SK-N-SH (cell line): ENCODE measurements at regions of chr14 and their contacts with region 1.

Region 1: GRCh38 chr14:105473677-105474482 is 741 bp upstream of the CRIP2 start:
- DNase-seq: peak; percentile 85
- H3K4me3 ChIP-seq: peak overlapping the region; percentile 52 to 92
- H3K27ac ChIP-seq: peak overlapping the region; percentile 81 to 99
- H3K4me1 ChIP-seq: peaks cover 18 to 63% of the 10 kb centered on the region in 2 experiments; a peak in 3 of 4 replicates
- H3K27me3 ChIP-seq: no peaks in the 10 kb centered on the region
- CTCF ChIP-seq: no peak
- EP300 ChIP-seq: no peak
- RAD21 ChIP-seq: no peak

Region 2: GRCh38 chr14:105368965-105369652 is 104.8 kb before region 1 on chr14:
- CTCF ChIA-PET with region 1: interaction called, 39 read pairs
- POLR2A ChIA-PET with region 1: no interaction called
- DNase-seq: no peak
- H3K4me3 ChIP-seq: no peak overlapping the region
- H3K27ac ChIP-seq: no peak overlapping the region
- H3K4me1 ChIP-seq: peaks cover 4 to 7% of the 10 kb centered on the region in 2 experiments; a peak in 2 of 4 replicates
- H3K27me3 ChIP-seq: no peaks in the 10 kb centered on the region
- CTCF ChIP-seq: no peak
- EP300 ChIP-seq: no peak
- RAD21 ChIP-seq: no peak

Region 3: DNA sequence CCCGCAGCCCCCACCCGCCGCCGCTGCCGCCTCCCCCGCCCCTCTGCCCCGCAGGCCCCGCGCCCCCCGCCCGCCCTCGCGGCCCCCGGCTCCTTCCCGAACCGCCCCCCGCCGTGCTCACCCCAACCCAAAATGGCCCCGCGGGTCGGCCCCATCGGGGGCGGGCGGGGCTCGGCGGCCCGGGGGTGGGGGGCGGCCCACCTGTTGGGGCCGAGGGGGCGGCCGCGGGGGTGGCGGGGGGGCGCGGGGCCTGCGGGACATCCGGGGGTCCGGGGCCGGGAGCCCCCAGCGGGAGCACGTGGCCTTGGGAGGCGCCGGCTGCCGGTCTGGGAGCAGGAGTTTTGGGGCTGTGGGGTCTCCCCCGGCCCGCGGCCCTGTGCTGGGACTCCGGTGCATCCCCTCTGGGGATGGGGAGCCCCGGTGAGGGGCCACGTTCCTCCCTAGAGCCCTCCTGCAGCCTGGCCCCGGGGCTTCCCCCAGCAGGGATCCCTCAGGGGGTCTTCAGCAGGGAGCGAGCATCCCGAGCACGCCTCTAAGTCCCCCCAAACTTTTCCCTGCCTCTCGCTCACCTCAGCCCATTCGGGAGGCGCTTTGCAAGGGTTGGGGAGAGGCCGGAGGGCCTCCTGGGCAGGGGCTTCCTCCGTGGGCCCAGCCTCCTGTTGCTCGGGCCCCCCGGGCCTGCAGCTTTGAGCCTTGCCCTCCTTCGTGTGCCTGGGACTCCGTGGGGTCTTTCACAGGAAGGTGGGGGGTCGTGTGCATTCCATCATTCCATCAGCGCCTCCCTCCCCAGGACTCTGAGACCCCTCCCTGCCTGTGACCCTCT is 53.6 kb before region 1 on chr14:
- CTCF ChIA-PET with region 1: interaction called, 12 read pairs
- POLR2A ChIA-PET with region 1: interaction called, 4 read pairs
- DNase-seq: peak; percentile 76
- H3K4me3 ChIP-seq: peak overlapping the region; percentile 66 to 74
- H3K27ac ChIP-seq: peak overlapping the region in 1 of 2 experiments; percentile 87; a peak in 3 of 4 replicates
- H3K4me1 ChIP-seq: peaks cover 12 to 46% of the 10 kb centered on the region in 2 experiments; a peak in 3 of 4 replicates
- H3K27me3 ChIP-seq: no peaks in the 10 kb centered on the region
- CTCF ChIP-seq: no peak
- EP300 ChIP-seq: no peak
- RAD21 ChIP-seq: no peak

Region 4: GRCh38 chr14:105448706-105449111 is 25.2 kb before region 1 on chr14:
- CTCF ChIA-PET with region 1: interaction called, 28 read pairs
- POLR2A ChIA-PET with region 1: interaction called, 3 read pairs
- DNase-seq: peak; percentile 96
- H3K4me3 ChIP-seq: peak overlapping the region in 1 of 2 experiments; percentile 32; a peak in 1 of 4 replicates
- H3K27ac ChIP-seq: no peak overlapping the region; a peak in 2 of 4 replicates
- H3K4me1 ChIP-seq: peaks cover 0 to 23% of the 10 kb centered on the region in 2 experiments; a peak in 1 of 4 replicates
- H3K27me3 ChIP-seq: no peaks in the 10 kb centered on the region
- CTCF ChIP-seq: peak; percentile 75
- EP300 ChIP-seq: no peak
- RAD21 ChIP-seq: peak; percentile 69

Region 5: DNA sequence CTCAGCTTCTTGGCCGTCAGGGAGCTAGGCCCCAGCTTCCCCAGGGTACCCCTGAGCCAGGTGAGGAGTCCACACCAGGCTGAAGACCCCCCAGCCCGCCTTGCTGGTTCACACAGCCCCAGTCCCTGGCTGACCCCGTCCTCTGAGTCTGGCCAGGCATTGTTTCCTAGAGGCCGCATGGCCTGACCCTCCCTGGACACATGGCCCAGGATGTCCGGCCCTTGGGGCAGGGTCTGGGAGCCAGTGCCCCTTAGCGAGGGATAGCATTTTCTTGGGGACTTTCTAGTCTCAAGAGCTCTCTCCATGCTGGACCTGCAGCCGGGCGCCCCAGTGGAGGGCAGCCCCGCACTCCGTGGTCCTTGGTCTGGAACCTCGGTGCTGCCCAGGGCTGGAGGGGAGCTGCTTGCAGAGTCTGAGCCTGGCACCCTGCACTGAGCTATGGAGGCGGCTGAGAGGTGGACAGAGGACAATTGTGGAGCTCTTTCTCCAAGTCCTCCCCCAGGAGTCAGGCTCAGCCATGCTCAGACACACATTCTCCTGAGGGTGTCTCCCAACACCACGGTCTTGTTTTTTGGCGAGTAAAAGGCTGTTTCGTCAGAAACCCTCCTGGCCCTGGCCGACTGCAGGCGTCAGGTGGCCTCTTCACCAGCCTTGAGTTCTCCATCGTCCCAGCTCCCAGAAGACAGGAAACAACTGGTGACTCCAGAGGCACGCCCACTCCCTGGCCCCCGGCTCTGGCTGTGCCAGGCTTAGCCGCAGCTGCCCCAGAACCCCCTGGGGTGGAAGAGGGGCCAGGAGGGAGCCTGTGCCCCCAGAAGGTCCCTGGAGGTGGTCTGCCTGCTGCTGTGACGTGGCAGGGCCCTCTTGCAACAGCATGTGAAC is 16.9 kb before region 1 on chr14:
- CTCF ChIA-PET with region 1: interaction called, 25 read pairs
- POLR2A ChIA-PET with region 1: interaction called, 3 read pairs
- DNase-seq: no peak
- H3K4me3 ChIP-seq: no peak overlapping the region
- H3K27ac ChIP-seq: no peak overlapping the region; a peak in 1 of 4 replicates
- H3K4me1 ChIP-seq: peaks cover 0 to 7% of the 10 kb centered on the region in 2 experiments; a peak in 1 of 4 replicates
- H3K27me3 ChIP-seq: no peaks in the 10 kb centered on the region
- CTCF ChIP-seq: no peak
- EP300 ChIP-seq: no peak
- RAD21 ChIP-seq: no peak

Region 6: GRCh38 chr14:105499256-105500030 is 25.6 kb after region 1 on chr14:
- CTCF ChIA-PET with region 1: no interaction called
- POLR2A ChIA-PET with region 1: no interaction called
- DNase-seq: peak; percentile 33
- H3K4me3 ChIP-seq: no peak overlapping the region
- H3K27ac ChIP-seq: no peak overlapping the region
- H3K4me1 ChIP-seq: peaks cover 0 to 3% of the 10 kb centered on the region in 2 experiments; a peak in 1 of 4 replicates
- H3K27me3 ChIP-seq: no peaks in the 10 kb centered on the region
- CTCF ChIP-seq: no peak
- EP300 ChIP-seq: no peak
- RAD21 ChIP-seq: no peak

Region 7: DNA sequence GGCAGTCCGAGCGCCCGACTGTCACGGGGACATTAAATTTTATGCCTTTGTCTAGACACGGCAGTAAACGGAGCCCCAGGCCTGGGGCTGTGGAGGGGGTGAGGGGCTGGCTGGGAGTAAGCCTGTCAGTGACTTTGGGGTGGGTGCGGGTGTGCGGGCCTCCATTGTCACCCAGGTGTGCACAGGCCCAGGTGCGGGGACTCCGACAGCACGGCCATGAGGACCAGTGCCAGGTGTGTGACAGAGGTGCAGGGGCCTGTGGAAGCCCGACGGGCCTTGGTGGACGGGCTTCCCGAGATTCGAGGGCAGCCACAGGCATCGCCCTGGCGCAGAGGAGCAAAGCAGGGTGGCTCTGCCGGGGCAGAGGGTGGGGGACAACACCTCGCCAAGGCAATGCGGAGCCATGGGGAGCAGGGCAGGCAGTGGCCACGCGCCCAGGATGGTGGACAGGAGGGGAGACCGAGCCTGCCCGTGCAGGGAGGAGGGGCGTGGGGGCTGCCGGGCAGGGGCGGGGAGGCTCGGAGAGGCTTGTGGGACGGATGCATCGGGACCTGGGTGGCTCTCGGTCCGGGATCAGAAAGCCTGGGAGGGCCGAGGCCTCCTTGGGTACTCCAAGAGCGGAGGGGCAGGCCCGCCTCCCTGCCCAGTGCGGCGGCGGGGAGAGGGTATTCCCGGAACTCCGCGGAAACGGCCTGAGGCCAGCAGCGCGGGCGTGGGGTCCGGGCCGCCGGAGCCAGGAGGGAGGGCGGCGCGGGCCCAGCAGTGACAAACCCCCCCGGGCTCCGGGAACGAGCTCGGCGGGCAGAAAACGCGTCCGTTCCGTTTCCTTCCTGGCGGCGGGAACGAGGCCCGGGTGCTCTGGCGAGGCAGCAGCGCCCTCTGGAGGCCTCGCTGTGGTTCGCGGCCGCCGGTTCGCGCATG is 54.0 kb after region 1 on chr14:
- CTCF ChIA-PET with region 1: interaction called, 10 read pairs
- POLR2A ChIA-PET with region 1: no interaction called
- DNase-seq: peak; percentile 97
- H3K4me3 ChIP-seq: peak overlapping the region; percentile 64 to 69
- H3K27ac ChIP-seq: peak overlapping the region; percentile 27 to 53; a peak in 2 of 4 replicates
- H3K4me1 ChIP-seq: peaks cover 4 to 17% of the 10 kb centered on the region in 2 experiments; a peak in 2 of 4 replicates
- H3K27me3 ChIP-seq: no peaks in the 10 kb centered on the region
- CTCF ChIP-seq: peak; percentile 68
- EP300 ChIP-seq: no peak
- RAD21 ChIP-seq: peak; percentile 83

Region 8: GRCh38 chr14:105549481-105549880 is 75.6 kb after region 1 on chr14:
- CTCF ChIA-PET with region 1: no interaction called
- POLR2A ChIA-PET with region 1: no interaction called
- DNase-seq: no peak
- H3K4me3 ChIP-seq: no peak overlapping the region
- H3K27ac ChIP-seq: no peak overlapping the region
- H3K4me1 ChIP-seq: no peaks in the 10 kb centered on the region
- H3K27me3 ChIP-seq: peaks cover 19% of the 10 kb centered on the region; the same call in 1 of the 2 replicates
- CTCF ChIP-seq: no peak
- EP300 ChIP-seq: no peak
- RAD21 ChIP-seq: no peak

Region 9: DNA sequence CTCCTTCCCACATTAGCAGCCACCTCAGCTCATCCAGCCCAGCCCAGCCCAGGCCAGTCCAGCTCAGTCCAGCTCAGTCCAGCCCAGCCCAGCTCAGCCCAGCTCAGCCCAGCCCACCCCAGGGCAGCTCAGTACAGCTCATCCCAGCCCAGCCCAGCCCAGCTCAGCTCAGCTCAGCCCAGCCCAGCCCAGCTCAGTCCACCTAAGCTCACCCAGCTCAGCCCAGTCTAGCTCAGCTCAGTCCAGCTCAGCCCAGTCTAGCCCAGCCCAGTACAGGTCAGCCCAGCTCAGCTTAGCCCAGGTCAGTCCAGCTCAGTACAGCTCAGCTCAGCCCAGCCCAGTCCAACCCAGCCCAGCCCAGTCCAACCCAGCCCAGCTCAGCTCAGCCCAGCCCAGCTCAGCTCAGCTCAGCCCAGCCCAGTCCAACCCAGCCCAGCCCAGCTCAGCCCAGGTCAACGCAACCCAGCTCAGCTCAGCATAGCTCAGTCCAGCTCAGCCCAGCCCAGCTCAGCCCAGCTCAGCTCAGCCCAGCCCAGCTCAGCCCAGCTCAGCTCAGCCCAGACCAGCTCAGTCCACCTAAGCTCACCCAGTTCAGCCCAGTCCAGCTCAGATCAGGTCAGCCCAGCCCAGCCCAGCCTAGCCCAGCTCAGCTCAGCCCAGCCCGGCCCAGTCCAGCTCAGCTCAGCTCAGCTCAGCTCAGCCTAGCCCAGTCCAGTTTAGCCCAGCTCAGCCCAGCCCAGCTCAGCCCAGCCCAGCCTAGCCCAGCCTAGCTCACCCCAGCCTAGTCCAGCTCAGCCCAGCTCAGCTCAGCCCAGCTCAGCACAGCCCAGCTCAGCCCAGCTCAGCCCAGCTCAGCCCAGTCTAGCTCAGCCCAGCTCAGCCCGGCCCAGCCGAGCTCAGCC is 115.5 kb after region 1 on chr14:
- CTCF ChIA-PET with region 1: no interaction called
- POLR2A ChIA-PET with region 1: no interaction called
- DNase-seq: no peak
- H3K4me3 ChIP-seq: no peak overlapping the region
- H3K27ac ChIP-seq: no peak overlapping the region
- H3K4me1 ChIP-seq: no peaks in the 10 kb centered on the region
- H3K27me3 ChIP-seq: no peaks in the 10 kb centered on the region
- CTCF ChIP-seq: no peak
- EP300 ChIP-seq: no peak
- RAD21 ChIP-seq: no peak